ENCODE measurements at regions of chr17 and their contacts with region 1.

Region 1: DNA sequence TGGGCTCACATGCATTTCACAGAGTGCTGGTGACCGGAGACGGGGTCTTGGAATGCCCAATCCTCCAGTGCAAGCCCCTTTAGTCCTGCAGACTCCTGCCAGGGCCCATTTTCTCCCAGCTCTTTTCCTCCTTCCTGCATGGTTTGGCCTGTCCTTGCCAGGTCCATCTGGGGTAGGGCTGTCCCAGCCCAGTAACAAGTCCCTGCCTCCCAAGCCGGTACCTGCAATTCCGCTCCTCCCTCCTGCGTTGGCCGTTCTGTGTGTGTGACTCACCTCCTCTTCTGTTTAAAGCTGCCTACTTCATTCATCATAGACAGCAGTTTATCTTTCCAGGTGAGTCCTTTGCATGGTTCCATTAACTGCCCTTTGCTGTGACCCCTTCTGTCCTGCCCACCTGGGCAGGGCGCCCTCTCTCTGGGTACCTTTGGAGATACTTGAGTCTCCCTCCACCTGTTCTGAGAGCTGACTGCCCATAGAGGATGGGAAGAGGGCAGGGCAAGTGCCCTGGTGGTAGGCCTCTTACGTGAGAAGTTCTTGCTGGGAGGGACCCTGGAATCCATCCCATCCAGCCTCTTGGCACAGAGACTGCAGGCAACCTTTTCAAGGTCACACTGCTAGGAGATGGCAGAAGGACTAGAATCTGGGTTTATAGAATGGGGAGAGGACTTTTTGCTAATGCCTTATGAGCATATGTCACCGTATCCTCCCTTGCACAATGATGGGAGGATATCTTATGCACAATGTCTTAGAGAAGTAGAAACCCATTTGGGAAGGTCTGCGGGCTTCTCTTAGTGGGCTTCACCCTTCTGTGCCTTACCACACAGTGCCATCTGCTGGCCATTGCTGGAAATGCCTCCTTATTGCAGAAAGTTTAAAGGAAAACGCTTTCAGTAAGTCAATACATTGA is 29.7 kb upstream of the LGALS9 start:
- DNase-seq: peak; percentile 64 to 82
- H3K4me3 ChIP-seq: no peak overlapping the region
- H3K27ac ChIP-seq: no peak overlapping the region
- H3K4me1 ChIP-seq: no peaks in the 10 kb centered on the region
- H3K27me3 ChIP-seq: no peaks in the 10 kb centered on the region
- CTCF ChIP-seq: peak; percentile 73 to 90 (median 88)
- POLR2A ChIP-seq: no peak

Region 2: DNA sequence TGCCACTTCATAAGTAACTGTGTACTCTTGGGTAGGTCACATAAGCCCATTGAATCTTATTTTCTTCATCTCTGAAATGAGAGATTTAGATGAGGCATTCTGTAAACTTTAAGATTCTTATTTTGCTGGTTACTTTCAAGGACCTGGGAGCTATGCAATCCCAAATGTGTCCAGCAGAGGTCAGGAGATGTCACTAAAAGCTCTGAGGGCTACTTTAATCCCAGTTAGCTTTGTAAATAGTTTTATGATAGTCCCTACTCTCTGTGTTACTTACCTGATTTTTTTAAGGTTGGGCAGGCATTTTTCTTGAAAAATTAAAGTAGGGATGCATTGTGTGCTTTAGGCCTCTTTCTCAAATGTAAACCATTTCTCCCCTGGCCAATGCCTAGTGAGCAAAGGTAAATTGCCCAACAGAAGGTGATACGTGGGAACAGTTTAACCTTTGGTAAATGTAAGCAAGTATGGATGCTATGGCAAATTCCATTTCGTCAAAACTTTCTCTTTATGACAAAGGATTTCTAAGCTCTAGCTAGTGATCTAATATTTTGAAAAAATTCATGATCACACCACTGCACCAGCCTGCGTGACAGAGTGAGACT is 364.5 kb before region 1 on chr17:
- intact Hi-C with region 1: loop called (anchors 5 kb)
- DNase-seq: peak; percentile 76 to 80
- H3K4me3 ChIP-seq: no peak overlapping the region
- H3K27ac ChIP-seq: no peak overlapping the region
- H3K4me1 ChIP-seq: peaks cover 0 to 14% of the 10 kb centered on the region in 2 donors
- H3K27me3 ChIP-seq: no peaks in the 10 kb centered on the region
- CTCF ChIP-seq: peak; percentile 84 to 92 (median 92)
- POLR2A ChIP-seq: no peak

Region 3: GRCh38 chr17:27353461-27354050 is 247.8 kb before region 1 on chr17:
- intact Hi-C with region 1: loop called (anchors 5 kb)
- DNase-seq: peak; percentile 89 to 91
- H3K4me3 ChIP-seq: peak overlapping the region; percentile 61 to 89 (median 75)
- H3K27ac ChIP-seq: peak overlapping the region; percentile 96 to 97
- H3K4me1 ChIP-seq: no peaks in the 10 kb centered on the region
- H3K27me3 ChIP-seq: no peaks in the 10 kb centered on the region
- CTCF ChIP-seq: peak in 2 of 3 donors; percentile 36 to 99
- POLR2A ChIP-seq: peak; percentile 80

Region 4: DNA sequence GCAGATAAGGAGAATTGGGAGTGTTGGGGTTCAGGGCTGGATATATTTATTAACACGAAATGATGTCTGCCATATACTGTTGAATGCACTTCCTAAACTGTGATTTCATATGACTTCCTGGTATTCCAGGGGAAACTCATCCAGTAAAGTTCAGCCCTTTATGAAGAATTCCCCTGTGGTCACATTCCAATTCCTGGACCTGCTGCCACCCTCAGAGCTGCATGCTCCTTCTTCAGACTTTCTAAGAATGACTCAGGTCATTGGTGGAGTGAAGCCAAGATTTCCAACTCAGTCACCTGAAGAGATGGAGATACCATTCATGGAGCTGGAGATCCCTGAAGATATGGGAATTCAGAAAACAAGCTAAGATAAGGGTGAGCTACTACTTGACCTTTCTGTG is 603.4 kb after region 1 on chr17:
- intact Hi-C with region 1: no loop called
- DNase-seq: no peak
- H3K4me3 ChIP-seq: no peak overlapping the region
- H3K27ac ChIP-seq: no peak overlapping the region
- H3K4me1 ChIP-seq: no peaks in the 10 kb centered on the region
- H3K27me3 ChIP-seq: no peaks in the 10 kb centered on the region
- CTCF ChIP-seq: no peak
- POLR2A ChIP-seq: no peak